ENCODE measurements at regions of chr12 and their contacts with region 1.

Region 1: DNA sequence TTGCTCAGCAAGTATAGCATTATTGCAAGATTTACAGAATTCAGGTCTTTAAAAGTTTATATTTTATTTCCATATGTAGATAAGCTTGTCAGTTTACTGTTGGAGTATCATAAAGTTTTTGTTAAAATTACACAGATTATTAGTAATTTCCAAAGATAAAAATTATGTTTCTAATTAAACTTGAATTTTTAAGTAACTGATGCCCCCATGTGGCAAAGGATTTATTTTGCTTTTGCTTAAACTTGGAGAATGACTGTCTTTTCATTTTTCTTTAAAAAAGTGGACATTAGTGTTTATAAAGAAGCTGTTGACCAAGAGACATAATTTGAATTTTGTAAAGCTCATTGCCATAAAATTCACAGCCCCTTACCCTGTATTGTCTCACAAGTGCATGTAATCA is 45.8 kb downstream of the ETNK1 start:
- DNase-seq: no peak
- ATAC-seq: no peak
- H3K4me3 Mint-ChIP-seq: no peak overlapping the region
- H3K27ac Mint-ChIP-seq: no peak overlapping the region
- H3K4me1 Mint-ChIP-seq: no peaks in the 10 kb centered on the region
- H3K27me3 Mint-ChIP-seq: no peaks in the 10 kb centered on the region

Region 2: GRCh38 chr12:22529281-22530060 is 141.3 kb before region 1 on chr12:
- CTCF ChIA-PET with region 1: interaction called, 14 read pairs
- POLR2A ChIA-PET with region 1: no interaction called
- intact Hi-C with region 1: loop called (anchors 5 kb)
- DNase-seq: no peak
- ATAC-seq: peak; percentile 91
- H3K4me3 Mint-ChIP-seq: no peak overlapping the region
- H3K27ac Mint-ChIP-seq: no peak overlapping the region
- H3K4me1 Mint-ChIP-seq: peaks cover 8% of the 10 kb centered on the region
- H3K27me3 Mint-ChIP-seq: no peaks in the 10 kb centered on the region

Region 3: DNA sequence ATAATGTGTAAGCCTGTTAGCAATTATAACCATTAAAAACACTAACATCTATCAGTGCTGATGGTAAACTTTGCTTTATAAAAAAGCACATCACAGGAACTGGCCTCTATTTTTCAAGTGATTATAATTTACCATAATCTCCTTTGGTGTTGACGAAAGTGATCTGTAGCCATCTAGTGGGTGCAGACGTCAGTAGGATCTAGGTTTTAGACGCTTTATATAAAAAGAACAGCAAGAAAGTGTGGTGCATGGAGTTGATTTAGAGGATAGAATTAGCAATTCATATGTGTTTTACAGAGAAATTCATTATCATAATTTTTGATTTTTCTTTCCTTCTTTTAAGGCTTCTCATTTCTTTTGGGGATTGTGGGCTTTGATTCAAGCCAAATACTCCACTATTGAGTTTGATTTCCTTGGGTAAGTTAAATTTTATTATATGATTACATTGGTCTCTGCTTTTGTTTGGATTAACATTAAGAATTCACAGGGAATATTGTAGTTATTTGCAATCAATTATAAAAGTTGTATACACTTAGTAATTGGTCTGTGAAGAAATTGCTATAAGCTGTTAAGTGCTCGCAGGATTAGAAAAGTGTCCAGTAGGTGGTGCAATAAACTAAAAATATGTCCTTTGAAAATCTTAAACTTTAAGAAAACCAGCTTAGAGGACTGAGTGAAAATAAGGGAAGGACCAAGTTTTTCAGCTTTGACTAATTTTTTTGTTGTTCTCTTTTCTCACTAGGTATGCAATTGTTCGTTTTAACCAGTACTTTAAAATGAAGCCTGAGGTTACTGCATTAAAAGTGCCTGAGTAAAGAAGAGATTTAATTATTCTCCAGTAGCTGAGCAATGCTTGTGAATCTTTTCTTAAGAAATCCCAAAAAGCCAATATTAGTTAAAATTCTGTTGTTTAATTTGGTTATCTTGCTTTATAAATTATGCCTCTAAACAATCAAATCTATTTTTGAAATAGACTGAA is 13.7 kb after region 1 on chr12:
- CTCF ChIA-PET with region 1: interaction called, 10 read pairs
- POLR2A ChIA-PET with region 1: no interaction called
- intact Hi-C with region 1: no loop called
- DNase-seq: no peak
- ATAC-seq: peak; percentile 39
- H3K4me3 Mint-ChIP-seq: no peak overlapping the region
- H3K27ac Mint-ChIP-seq: no peak overlapping the region
- H3K4me1 Mint-ChIP-seq: peaks cover 14% of the 10 kb centered on the region
- H3K27me3 Mint-ChIP-seq: no peaks in the 10 kb centered on the region

Measured in activated CD4-positive, alpha-beta T cell treated with anti-CD3 and anti-CD28 coated beads for 36 hours (primary cell).